AG04449 (cell line): ENCODE measurements at regions of chr12 and their contacts with region 1.

Region 1: DNA sequence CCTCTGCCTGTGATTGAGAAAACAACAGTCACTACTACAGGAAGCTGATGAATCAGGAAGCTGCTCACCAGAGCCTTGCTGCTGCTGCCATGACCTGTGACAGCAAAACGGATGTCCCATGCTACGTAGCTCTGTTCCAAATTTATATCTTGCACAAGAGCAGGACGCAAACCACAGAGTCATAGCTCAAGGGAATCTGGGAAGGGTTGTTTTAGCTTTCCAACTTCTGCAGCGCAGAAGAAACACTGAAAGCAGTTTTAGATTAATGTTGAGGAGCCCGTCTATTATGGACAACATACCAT is 1.9 kb upstream of the ANKRD33 start:
- DNase-seq: peak; percentile 88
- H3K4me3 ChIP-seq: no peak overlapping the region
- CTCF ChIP-seq: no peak

Region 2: GRCh38 chr12:51496895-51497294 is 389.1 kb before region 1 on chr12:
- CTCF ChIA-PET with region 1: no interaction called
- POLR2A ChIA-PET with region 1: no interaction called
- DNase-seq: no peak
- H3K4me3 ChIP-seq: no peak overlapping the region
- CTCF ChIP-seq: no peak

Region 3: GRCh38 chr12:51980051-51980808 is 94.3 kb after region 1 on chr12:
- CTCF ChIA-PET with region 1: interaction called, 146 read pairs
- POLR2A ChIA-PET with region 1: no interaction called
- DNase-seq: no peak
- H3K4me3 ChIP-seq: no peak overlapping the region
- CTCF ChIP-seq: peak; percentile 91